ENCODE measurements at regions of chr22 and their contacts with region 1.

Region 1: GRCh38 chr22:19291580-19292457 is at the start of gene CLTCL1:
- DNase-seq: peak; percentile 85
- H3K4me3 Mint-ChIP-seq: peak within 1 kb of the TSS; percentile 74
- H3K27ac Mint-ChIP-seq: peak within 1 kb of the TSS; percentile 19
- H3K4me1 Mint-ChIP-seq: peaks cover 9% of the 10 kb centered on the region
- H3K27me3 Mint-ChIP-seq: peaks cover 56% of the 10 kb centered on the region
- CTCF ChIP-seq: no peak
- total RNA-seq, gene CLTCL1: 2.9 and 4.4 TPM in 2 replicates

Region 2: GRCh38 chr22:19152942-19153883 is 138.6 kb before region 1 on chr22:
- CTCF ChIA-PET with region 1: interaction called, 10 read pairs
- intact Hi-C with region 1: no loop called
- DNase-seq: no peak
- H3K4me3 Mint-ChIP-seq: no peak overlapping the region
- H3K27ac Mint-ChIP-seq: no peak overlapping the region
- H3K4me1 Mint-ChIP-seq: no peaks in the 10 kb centered on the region
- H3K27me3 Mint-ChIP-seq: peaks cover 45% of the 10 kb centered on the region
- CTCF ChIP-seq: no peak

Region 3: DNA sequence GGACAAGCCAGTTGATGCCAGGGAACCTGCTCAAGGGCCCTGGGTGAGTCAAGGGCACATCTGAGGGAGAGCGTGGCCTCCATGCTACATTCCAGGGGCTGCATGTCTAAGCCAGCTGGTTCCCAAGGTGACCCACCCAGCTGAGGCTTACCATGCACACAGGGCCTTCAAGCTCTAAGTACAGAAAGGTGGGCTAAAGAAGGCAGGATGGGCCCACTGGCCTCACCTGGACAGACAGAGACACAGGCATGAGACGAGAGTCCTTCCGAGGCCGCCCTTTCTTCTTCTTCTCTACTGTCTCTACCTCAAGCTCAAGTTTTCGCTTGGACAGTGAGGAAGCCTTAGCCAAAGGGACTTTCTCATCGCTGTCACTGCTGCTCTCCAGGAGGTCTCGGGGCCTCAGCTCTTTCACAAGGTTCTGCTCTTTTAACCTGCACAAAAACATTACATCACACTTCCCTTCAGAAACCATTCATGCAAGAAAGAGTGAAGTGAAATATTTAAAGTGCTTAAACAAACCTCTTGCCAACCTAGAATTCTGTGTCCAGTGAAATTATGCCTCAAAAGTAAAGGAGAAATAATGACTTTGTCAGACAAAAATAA is 69.8 kb after region 1 on chr22:
- CTCF ChIA-PET with region 1: no interaction called
- intact Hi-C with region 1: no loop called
- DNase-seq: no peak
- H3K4me3 Mint-ChIP-seq: no peak overlapping the region
- H3K27ac Mint-ChIP-seq: no peak overlapping the region
- H3K4me1 Mint-ChIP-seq: no peaks in the 10 kb centered on the region
- H3K27me3 Mint-ChIP-seq: no peaks in the 10 kb centered on the region
- CTCF ChIP-seq: no peak

Region 4: GRCh38 chr22:19717691-19718455 is 426.1 kb after region 1 on chr22:
- CTCF ChIA-PET with region 1: no interaction called
- intact Hi-C with region 1: loop called (anchors 5 kb)
- DNase-seq: peak; percentile 86
- H3K4me3 Mint-ChIP-seq: peak overlapping the region; percentile 69
- H3K27ac Mint-ChIP-seq: no peak overlapping the region
- H3K4me1 Mint-ChIP-seq: peaks cover 2% of the 10 kb centered on the region
- H3K27me3 Mint-ChIP-seq: peaks cover 59% of the 10 kb centered on the region
- CTCF ChIP-seq: peak; percentile 97